ENCODE measurements at regions of chr13 and their contacts with region 1.

Region 1: DNA sequence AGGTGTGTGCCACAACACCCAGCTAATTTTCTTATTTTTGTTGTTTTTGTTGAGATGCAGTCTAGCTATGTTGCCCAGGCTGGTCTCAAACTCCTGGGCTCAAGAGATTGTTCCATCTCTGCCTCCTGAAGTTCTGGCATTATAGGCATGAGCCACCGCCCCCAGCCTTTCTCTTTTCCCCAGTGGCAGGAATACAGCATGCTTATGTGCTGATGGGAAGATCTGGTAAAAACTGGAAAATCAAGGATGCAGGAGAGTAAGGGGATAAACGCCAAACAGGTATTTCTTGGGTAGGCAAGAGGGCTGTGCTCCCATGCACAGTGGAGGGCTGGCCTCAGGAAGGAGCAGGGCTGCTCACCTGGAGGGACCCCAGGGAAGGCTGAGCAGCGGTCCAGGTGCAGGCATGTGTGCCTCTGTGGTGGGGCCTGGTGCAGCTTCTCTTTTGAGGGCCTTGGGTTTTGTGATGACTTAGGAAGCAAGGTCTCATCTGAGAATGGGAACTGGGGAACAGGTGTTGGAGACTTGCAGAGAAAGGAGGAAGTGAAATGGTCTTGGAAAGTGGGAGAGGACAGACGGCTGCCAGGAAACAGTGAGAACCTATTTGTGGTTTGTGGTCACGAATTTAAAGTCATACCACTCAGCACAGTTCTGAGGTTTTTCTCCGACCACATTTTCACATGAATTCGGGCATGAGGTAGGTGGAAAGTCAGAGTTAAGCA is 106.5 kb downstream of the TEX26 start:
- DNase-seq: peak; percentile 84
- ATAC-seq: peak; percentile 83
- H3K4me3 ChIP-seq: no peak overlapping the region
- H3K27ac ChIP-seq: no peak overlapping the region
- H3K4me1 ChIP-seq: peaks cover 28% of the 10 kb centered on the region
- H3K27me3 ChIP-seq: no peaks in the 10 kb centered on the region
- CTCF ChIP-seq: no peak
- EP300 ChIP-seq: peak; percentile 60 to 75
- POLR2A ChIP-seq: no peak
- RAD21 ChIP-seq: no peak

Region 2: DNA sequence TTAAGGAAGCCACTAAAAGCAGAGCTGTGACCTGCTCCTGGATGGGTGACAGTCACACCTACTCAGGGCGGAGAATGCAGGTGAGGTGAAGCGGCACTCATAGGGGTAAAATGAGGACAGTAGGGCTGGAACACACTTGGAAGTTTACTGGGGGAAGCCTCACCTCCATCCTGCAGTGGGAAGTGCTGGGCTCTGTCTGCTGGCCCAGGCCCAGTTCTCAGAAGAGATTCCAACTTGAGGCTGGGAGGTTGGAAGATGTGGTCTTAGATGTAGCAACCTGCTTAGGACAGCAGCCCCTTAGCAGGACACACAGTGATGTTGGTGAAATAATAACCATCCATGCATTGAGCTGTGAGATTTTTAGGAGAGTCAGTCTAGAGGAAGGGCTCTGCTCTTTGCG is 128.3 kb before region 1 on chr13:
- CTCF ChIA-PET with region 1: no interaction called
- POLR2A ChIA-PET with region 1: no interaction called
- RAD21 ChIA-PET with region 1: no interaction called
- SMC1A ChIA-PET with region 1: no interaction called
- in situ Hi-C with region 1: no loop called
- intact Hi-C with region 1: no loop called
- DNase-seq: no peak
- ATAC-seq: no peak
- H3K4me3 ChIP-seq: no peak overlapping the region
- H3K27ac ChIP-seq: no peak overlapping the region
- H3K4me1 ChIP-seq: no peaks in the 10 kb centered on the region
- H3K27me3 ChIP-seq: peaks cover 3 to 6% of the 10 kb centered on the region in 2 experiments
- CTCF ChIP-seq: no peak
- EP300 ChIP-seq: no peak
- POLR2A ChIP-seq: no peak
- RAD21 ChIP-seq: no peak

Region 3: DNA sequence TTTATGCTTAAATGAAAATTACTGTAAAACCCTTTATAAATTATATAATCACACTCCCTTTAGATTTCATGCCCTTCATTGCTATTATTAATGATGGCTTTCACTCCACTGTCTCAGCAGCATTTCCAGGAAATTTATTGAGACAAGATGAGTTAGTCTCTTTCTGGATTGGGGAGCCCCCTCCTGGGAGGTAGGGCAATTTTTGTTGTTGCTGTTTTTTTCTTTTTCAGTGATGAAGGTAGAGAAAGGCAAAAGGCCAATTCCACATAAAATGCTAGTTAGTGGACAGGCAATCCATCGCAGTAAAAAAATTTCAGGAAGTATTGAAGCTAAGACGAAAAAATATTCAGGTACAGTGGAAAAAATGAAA is 26.4 kb before region 1 on chr13:
- CTCF ChIA-PET with region 1: interaction called, 5 read pairs
- POLR2A ChIA-PET with region 1: interaction called, 3 read pairs
- RAD21 ChIA-PET with region 1: no interaction called
- SMC1A ChIA-PET with region 1: interaction called, 6 read pairs
- in situ Hi-C with region 1: no loop called
- intact Hi-C with region 1: loop called (anchors 2 kb)
- DNase-seq: no peak
- ATAC-seq: no peak
- H3K4me3 ChIP-seq: no peak overlapping the region
- H3K27ac ChIP-seq: no peak overlapping the region
- H3K4me1 ChIP-seq: peaks cover 14% of the 10 kb centered on the region
- H3K27me3 ChIP-seq: no peaks in the 10 kb centered on the region
- CTCF ChIP-seq: peak in 2 of 3 experiments; percentile 5 to 9; a peak in 2 of 6 replicates
- EP300 ChIP-seq: no peak
- POLR2A ChIP-seq: no peak
- RAD21 ChIP-seq: no peak

Measured in GM12878 (cell line).